CD14-positive monocyte (primary cell): ENCODE measurements at regions of chr22 and their contacts with region 1.

Region 1: DNA sequence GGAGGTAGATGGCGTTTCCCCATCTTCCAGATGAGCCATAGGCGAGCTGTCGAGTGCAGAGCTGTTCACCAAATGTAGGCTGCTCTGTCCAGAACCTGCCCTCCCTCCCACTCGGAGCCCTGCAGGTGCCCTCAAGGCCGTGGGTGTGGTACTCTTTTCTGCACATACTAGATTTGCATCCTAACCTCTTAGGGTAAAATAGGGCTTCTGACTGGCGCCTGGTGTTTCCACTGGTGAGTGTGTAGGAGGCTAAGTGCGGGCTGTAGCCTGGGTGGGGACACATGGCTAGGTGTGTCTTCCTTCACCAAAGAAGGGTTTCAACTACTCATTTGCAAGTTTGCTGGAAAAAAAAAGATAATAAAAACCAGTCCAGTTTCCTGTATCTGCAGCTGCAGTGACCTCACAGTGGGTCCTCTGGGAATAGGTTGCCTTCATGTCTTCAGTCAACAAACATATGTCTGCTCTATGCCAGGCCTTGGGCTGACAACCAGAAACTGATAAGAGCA is 8.5 kb downstream of the BIK start:
- DNase-seq: no peak
- H3K4me3 ChIP-seq: no peak overlapping the region
- H3K4me3 Mint-ChIP-seq: no peak overlapping the region
- H3K27ac ChIP-seq: no peak overlapping the region
- H3K27ac Mint-ChIP-seq: peak overlapping the region in 3 of 7 donors; percentile 13 to 50 (median 42)
- H3K4me1 ChIP-seq: peaks cover 41 to 54% of the 10 kb centered on the region in 2 donors
- H3K4me1 Mint-ChIP-seq: peaks cover 50% of the 10 kb centered on the region
- H3K27me3 ChIP-seq: no peaks in the 10 kb centered on the region
- H3K27me3 Mint-ChIP-seq: peaks cover 2 to 6% (median 3%) of the 10 kb centered on the region in 3 donors
- CTCF ChIP-seq: no peak

Region 2: DNA sequence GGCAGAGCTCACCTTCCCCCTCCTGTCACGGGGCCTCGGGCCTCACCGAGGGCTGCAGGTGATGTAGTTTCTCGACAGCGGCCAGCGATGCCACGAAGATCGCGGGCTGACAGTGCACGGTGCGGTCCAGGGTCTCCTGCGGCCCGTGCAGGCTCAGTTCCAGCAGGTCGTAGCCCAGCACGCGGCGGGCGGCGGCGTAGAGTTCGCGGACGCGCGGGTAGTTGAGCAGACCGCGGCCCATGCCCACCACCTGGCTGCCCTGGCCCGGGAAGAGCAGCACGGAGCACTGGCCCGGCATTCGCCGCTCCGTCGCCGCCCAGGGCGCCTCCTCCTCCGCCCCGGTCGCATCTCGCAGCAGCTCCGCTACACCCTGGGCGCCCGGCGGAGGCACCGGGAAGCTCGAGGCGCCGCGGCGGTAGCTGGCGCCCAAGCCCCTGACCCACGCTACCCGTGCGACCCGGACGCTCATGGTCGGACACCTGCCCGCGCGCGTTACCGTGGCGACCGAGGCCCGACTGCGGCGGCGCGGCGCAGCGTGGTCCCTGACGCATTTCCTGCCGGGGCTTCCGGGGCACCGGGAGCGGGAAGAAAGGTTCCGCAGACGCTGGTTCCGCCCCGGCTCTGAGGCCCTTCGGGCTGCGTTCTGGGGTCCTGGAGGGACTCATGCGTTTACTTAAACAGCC is 24.0 kb after region 1 on chr22 and contains the start of gene MCAT:
- intact Hi-C with region 1: loop called in 1 of 2 experiments (anchors 2 kb)
- DNase-seq: peak; percentile 65 to 80 (median 75)
- H3K4me3 ChIP-seq: peak within 1 kb of the TSS; percentile 54 to 82 (median 64)
- H3K4me3 Mint-ChIP-seq: peak within 1 kb of the TSS; percentile 84 to 91
- H3K27ac ChIP-seq: peak within 1 kb of the TSS; percentile 49 to 88
- H3K27ac Mint-ChIP-seq: peak within 1 kb of the TSS; percentile 87 to 99 (median 94)
- H3K4me1 ChIP-seq: peaks cover 37 to 53% of the 10 kb centered on the region in 2 donors
- H3K4me1 Mint-ChIP-seq: peaks cover 50% of the 10 kb centered on the region
- H3K27me3 ChIP-seq: no peaks in the 10 kb centered on the region
- H3K27me3 Mint-ChIP-seq: no peaks in the 10 kb centered on the region
- CTCF ChIP-seq: no peak
- polyA plus RNA-seq, gene MCAT: 4.5 to 8.9 (median 6.8) TPM

Region 3: GRCh38 chr22:43624144-43624998 is 505.4 kb after region 1 on chr22:
- intact Hi-C with region 1: no loop called
- DNase-seq: no peak
- H3K4me3 ChIP-seq: no peak overlapping the region
- H3K4me3 Mint-ChIP-seq: no peak overlapping the region
- H3K27ac ChIP-seq: no peak overlapping the region
- H3K27ac Mint-ChIP-seq: peak overlapping the region in 1 of 7 donors; percentile 62
- H3K4me1 ChIP-seq: no peaks in the 10 kb centered on the region
- H3K4me1 Mint-ChIP-seq: no peaks in the 10 kb centered on the region
- H3K27me3 ChIP-seq: no peaks in the 10 kb centered on the region
- H3K27me3 Mint-ChIP-seq: peaks cover 0 to 8% (median 2%) of the 10 kb centered on the region in 3 donors
- CTCF ChIP-seq: no peak